ENCODE measurements at regions of chr7 and their contacts with region 1.

Region 1: DNA sequence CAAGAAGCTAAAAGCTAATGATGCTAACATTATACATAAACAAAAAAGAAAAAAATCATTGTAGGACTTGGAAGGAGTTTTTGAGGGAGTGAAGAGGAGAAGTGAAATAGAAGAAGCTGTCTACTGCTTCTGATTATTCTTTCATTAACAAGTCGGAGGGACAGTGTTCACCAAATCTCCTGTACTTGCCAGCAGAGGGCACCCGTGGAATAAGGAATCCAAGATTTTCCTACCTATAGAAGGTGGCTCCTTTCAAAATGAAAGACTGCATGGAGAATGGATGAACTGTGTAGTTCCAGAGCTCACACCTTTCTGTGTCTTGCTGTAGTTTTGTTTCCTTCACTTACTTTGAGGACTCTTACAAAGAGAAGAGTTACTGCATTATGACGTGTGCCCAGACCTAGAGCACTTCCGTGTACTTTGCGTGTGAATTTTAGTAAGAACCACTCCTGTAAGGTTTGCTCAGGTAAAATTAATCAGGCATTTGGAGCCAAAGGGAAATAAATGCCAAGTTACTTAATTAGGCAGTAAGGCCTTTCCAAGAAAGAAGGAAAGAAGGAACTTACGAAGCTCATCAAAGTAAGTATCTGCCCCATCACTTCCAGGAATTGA is 145.1 kb downstream of the SEMA3D start:
- DNase-seq: no peak
- H3K4me3 ChIP-seq: no peak overlapping the region
- H3K27ac ChIP-seq: no peak overlapping the region
- H3K4me1 ChIP-seq: no peaks in the 10 kb centered on the region
- H3K27me3 ChIP-seq: peaks cover 0 to 5% (median 0%) of the 10 kb centered on the region in 4 donors
- CTCF ChIP-seq: peak; percentile 57 to 66 (median 59)
- EP300 ChIP-seq: no peak
- POLR2A ChIP-seq: no peak

Region 2: DNA sequence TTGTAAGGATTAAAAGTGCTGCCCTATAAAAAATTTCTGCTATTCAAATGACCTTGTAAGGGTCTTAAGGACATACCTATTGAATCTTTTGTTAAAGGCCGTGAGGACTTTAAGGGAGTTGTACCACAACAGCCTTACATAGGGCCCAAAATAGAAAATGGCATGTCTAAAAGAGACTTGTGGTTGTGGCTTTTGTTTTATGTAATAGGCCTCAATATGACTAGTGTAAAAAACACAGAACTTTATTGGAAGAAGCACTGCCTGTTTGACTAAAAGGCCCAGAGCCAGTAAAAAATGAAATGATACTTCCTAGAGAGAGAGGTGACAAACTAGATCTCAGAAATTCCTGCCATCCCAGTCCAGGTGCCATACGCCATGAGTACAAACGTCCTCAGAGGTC is 141.5 kb before region 1 on chr7:
- intact Hi-C with region 1: no loop called
- DNase-seq: no peak
- H3K4me3 ChIP-seq: no peak overlapping the region
- H3K27ac ChIP-seq: no peak overlapping the region
- H3K4me1 ChIP-seq: peaks cover 0 to 6% (median 0%) of the 10 kb centered on the region in 4 donors
- H3K27me3 ChIP-seq: no peaks in the 10 kb centered on the region
- CTCF ChIP-seq: no peak
- EP300 ChIP-seq: no peak
- POLR2A ChIP-seq: no peak

Region 3: GRCh38 chr7:85186521-85187241 is 145.0 kb after region 1 on chr7 and contains the start of gene SEMA3D:
- intact Hi-C with region 1: loop called (anchors 10 kb)
- DNase-seq: no peak
- H3K4me3 ChIP-seq: peak within 1 kb of the TSS; percentile 53 to 65 (median 56)
- H3K27ac ChIP-seq: peak within 1 kb of the TSS; percentile 19 to 44 (median 36)
- H3K4me1 ChIP-seq: peaks cover 5 to 30% (median 27%) of the 10 kb centered on the region in 4 donors
- H3K27me3 ChIP-seq: peaks cover 0 to 35% (median 0%) of the 10 kb centered on the region in 4 donors
- CTCF ChIP-seq: peak; percentile 40 to 74 (median 55)
- EP300 ChIP-seq: no peak
- POLR2A ChIP-seq: no peak
- total RNA-seq, gene SEMA3D: 0.42 to 2.2 (median 1.4) TPM

Region 4: GRCh38 chr7:85554236-85555178 is 512.8 kb after region 1 on chr7:
- intact Hi-C with region 1: loop called (anchors 5 kb)
- DNase-seq: no peak
- H3K4me3 ChIP-seq: no peak overlapping the region
- H3K27ac ChIP-seq: no peak overlapping the region
- H3K4me1 ChIP-seq: no peaks in the 10 kb centered on the region
- H3K27me3 ChIP-seq: no peaks in the 10 kb centered on the region
- CTCF ChIP-seq: peak; percentile 50 to 74 (median 64)
- EP300 ChIP-seq: no peak
- POLR2A ChIP-seq: no peak

Region 5: GRCh38 chr7:85845616-85846015 is 803.9 kb after region 1 on chr7:
- intact Hi-C with region 1: loop called (anchors 5 kb)
- DNase-seq: no peak
- H3K4me3 ChIP-seq: no peak overlapping the region
- H3K27ac ChIP-seq: no peak overlapping the region
- H3K4me1 ChIP-seq: peaks cover 0 to under 1% (median 0%) of the 10 kb centered on the region in 4 donors
- H3K27me3 ChIP-seq: no peaks in the 10 kb centered on the region
- CTCF ChIP-seq: no peak
- EP300 ChIP-seq: no peak
- POLR2A ChIP-seq: no peak

Region 6: DNA sequence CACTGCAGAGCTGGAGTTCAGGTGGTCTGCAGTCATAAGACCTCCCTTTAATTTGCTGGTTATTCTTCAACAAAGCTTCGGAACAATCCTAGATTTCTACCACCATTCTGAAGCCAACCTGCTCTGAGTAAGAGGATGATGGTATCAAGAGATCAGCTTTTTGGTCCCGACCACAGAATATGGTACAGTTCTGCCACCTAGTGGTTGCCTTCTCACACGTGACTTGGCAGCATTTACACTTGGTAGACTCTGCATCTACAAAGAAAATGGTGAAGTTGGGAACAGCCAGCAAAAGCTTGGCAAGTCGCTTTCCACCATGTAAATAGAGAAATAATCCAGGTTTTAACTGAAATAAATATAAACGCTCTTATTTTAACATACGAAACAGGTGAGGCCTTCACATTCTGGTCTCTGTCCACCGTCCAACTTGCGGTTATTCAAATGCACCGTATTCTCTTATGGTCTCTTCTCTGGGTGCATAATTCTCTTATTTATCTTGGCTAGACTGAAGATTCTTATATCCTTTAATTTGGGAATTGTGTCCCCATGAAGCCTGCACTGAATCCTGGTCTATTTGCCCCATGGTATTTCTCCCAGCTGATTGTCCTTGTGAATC is 1428.1 kb after region 1 on chr7:
- intact Hi-C with region 1: loop called (anchors 5 kb)
- DNase-seq: no peak
- H3K4me3 ChIP-seq: no peak overlapping the region
- H3K27ac ChIP-seq: no peak overlapping the region
- H3K4me1 ChIP-seq: no peaks in the 10 kb centered on the region
- H3K27me3 ChIP-seq: no peaks in the 10 kb centered on the region
- CTCF ChIP-seq: peak in 2 of 3 experiments; percentile 30 to 56
- EP300 ChIP-seq: no peak
- POLR2A ChIP-seq: no peak

Measured in esophagus muscularis mucosa (tissue), 4 donors.